Motor neuron (in vitro differentiated cells): ENCODE measurements at regions of chr3 and their contacts with region 1.

Region 1: DNA sequence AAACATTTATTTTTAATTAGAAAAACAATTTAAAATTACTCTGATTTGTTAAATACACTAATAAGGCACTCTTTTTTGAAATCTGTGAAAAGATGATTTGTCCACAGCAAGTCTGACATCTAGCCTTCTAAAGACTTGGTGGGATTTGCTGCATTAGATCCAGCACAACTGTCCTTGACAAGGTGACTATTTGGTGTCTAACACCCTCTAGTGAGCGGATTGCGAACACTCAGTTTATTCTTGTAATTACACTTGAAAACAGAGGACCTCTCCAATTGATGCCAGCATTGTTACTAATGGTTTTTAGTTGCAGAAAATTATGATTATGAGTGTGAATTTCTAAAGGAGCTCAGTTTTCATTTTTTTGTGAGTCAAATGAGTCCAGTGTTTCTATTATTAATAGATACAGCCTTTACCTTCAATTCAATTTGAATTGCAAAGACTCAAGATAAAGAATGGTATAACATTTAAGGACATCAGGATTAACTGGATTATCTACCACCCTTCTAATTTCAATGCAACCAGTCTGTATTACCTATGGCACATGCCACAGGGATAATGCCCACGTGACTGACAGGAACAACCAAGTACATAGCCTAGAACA is 29.7 kb upstream of the STRIT1 start:
- ATAC-seq: peak; percentile 73 to 90 (median 81)
- H3K4me3 ChIP-seq: no peak overlapping the region
- H3K27ac ChIP-seq: no peak overlapping the region
- H3K4me1 ChIP-seq: peaks cover 3 to 5% of the 10 kb centered on the region in 2 donors

Region 2: GRCh38 chr3:154334973-154335420 is 988.2 kb before region 1 on chr3:
- in situ Hi-C with region 1: loop called in 4 of 9 experiments (anchors 10 to 25 kb)
- ATAC-seq: peak in 2 of 8 experiments; percentile 18 to 28
- H3K4me3 ChIP-seq: no peak overlapping the region
- H3K27ac ChIP-seq: no peak overlapping the region
- H3K4me1 ChIP-seq: no peaks in the 10 kb centered on the region

Region 3: GRCh38 chr3:154758109-154758868 is 564.9 kb before region 1 on chr3:
- in situ Hi-C with region 1: loop called in 5 of 9 experiments (anchors 10 to 25 kb)
- ATAC-seq: peak in 3 of 8 experiments; percentile 27 to 46 (median 34)
- H3K4me3 ChIP-seq: no peak overlapping the region
- H3K27ac ChIP-seq: no peak overlapping the region
- H3K4me1 ChIP-seq: no peaks in the 10 kb centered on the region

Region 4: GRCh38 chr3:154766765-154767503 is 556.2 kb before region 1 on chr3:
- in situ Hi-C with region 1: loop called in 5 of 9 experiments (anchors 10 to 25 kb)
- ATAC-seq: peak in 1 of 8 experiments; percentile 54
- H3K4me3 ChIP-seq: no peak overlapping the region
- H3K27ac ChIP-seq: no peak overlapping the region
- H3K4me1 ChIP-seq: no peaks in the 10 kb centered on the region

Region 5: GRCh38 chr3:154954753-154955152 is 368.4 kb before region 1 on chr3:
- in situ Hi-C with region 1: loop called in 3 of 9 experiments (anchors 10 to 25 kb)
- ATAC-seq: peak in 3 of 8 experiments; percentile 76 to 95 (median 94)
- H3K4me3 ChIP-seq: no peak overlapping the region
- H3K27ac ChIP-seq: no peak overlapping the region
- H3K4me1 ChIP-seq: no peaks in the 10 kb centered on the region

Region 6: DNA sequence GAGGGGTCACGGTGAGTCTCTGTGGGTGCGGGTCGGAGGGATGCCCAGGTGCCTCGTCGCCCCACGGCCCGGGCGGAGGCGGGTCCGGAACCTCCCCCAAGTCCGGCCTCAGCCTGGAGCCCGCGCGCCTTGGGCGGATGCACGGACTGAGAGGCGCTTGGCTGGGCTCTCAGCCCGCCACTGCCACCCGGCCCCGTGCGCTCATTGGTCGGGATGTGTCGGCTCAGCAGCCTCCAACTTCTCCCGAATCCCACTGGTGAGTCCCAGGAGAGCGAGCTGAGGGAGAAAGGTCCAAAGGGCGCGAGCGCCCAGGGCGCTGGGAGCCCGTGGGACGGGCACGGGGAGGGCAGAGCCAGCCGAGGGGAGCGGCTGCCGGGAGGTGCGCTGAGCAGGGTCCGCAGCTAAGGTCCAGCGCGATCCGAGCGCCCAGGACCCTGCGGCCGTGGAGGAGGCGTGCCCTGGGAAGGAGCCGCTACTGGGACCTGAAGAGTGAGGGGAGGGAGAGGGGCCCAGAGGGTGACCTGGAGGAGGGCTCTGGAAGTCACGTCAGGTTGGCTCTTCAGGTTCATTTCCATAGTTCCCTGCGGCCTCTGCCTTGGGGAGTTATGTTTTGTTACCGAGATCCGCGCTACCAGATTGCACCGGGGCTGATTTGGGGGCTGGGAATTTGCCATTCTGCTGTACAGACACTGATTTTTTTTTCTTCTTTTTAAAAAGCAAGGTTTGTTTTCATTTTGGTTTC is 243.2 kb before region 1 on chr3 and contains the start of gene MME:
- in situ Hi-C with region 1: loop called in 1 of 9 experiments (anchors 25 kb)
- ATAC-seq: peak; percentile 90 to 97 (median 92)
- H3K4me3 ChIP-seq: peak within 1 kb of the TSS; percentile 37 to 57 (median 48)
- H3K27ac ChIP-seq: no peak within 1 kb of the TSS
- H3K4me1 ChIP-seq: peaks cover 0 to 3% of the 10 kb centered on the region in 2 donors
- total RNA-seq, gene MME: 0.49 to 47.3 (median 1.2) TPM